Activated T-helper 2 cell treated with anti-CD3 and anti-CD28 coated beads, Interferon-gamma antibody, Interleukin-2, Interleukin-4, amounts not matched to agents 10 μg/mL and 5 μg/mL and 100 μg/mL, durations not matched to agents 14 hours and 24 hours and 36 hours (primary cell): ENCODE measurements at regions of chr20 and their contacts with region 1.

Region 1: DNA sequence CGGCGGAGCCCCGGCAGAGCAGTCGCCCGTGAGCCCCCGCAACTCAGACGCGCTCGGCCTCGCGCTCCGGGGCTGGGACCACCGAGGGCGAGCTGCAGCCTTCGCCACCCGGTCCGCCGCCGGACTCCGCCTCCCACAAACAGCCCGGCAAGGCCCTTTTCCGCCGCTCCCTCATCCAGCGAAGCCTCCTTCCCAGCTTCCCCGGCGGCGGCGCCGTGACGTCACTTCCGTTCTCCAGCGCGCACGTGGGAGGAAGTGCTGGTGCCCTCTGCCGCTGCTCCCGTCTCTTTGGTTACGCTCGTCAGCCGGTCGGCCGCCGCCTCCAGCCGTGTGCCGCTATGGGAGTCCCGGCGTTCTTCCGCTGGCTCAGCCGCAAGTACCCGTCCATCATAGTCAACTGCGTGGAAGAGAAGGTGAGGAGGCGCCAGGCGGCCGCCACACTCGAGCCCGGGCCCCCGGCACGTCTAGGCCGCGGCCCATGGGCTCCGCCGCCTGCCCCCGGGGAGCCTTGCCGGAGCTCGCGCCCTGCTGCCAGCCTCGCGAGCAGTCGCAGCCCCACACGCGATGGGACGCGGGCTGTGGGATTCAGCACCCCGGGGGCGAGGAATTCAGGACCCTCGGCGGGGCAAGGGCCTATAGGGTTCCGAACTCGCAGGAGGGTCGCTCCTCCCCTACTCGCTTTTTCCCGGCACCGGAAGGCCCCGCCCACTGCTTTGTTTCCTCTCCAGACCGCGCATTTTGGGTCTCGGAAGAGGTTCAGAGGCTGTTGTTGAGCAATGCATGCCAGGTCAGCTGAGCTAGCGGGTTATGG is at the start of gene XRN2:
- DNase-seq: peak; percentile 92
- H3K4me3 Mint-ChIP-seq: peak within 1 kb of the TSS; percentile 97
- H3K27ac Mint-ChIP-seq: peak within 1 kb of the TSS; percentile 99
- H3K4me1 Mint-ChIP-seq: peaks cover 29% of the 10 kb centered on the region
- H3K27me3 Mint-ChIP-seq: no peaks in the 10 kb centered on the region
- total RNA-seq, gene XRN2: 87.7 and 90.2 TPM in 2 replicates

Region 2: GRCh38 chr20:21125849-21126580 is 177.3 kb before region 1 on chr20 and contains the start of gene KIZ:
- intact Hi-C with region 1: loop called (anchors 1 kb)
- DNase-seq: peak; percentile 95
- H3K4me3 Mint-ChIP-seq: peak within 1 kb of the TSS; percentile 86
- H3K27ac Mint-ChIP-seq: peak within 1 kb of the TSS; percentile 70
- H3K4me1 Mint-ChIP-seq: peaks cover 21% of the 10 kb centered on the region
- H3K27me3 Mint-ChIP-seq: peaks cover 1% of the 10 kb centered on the region
- total RNA-seq, gene KIZ: 8.9 and 10.5 TPM in 2 replicates

Region 3: DNA sequence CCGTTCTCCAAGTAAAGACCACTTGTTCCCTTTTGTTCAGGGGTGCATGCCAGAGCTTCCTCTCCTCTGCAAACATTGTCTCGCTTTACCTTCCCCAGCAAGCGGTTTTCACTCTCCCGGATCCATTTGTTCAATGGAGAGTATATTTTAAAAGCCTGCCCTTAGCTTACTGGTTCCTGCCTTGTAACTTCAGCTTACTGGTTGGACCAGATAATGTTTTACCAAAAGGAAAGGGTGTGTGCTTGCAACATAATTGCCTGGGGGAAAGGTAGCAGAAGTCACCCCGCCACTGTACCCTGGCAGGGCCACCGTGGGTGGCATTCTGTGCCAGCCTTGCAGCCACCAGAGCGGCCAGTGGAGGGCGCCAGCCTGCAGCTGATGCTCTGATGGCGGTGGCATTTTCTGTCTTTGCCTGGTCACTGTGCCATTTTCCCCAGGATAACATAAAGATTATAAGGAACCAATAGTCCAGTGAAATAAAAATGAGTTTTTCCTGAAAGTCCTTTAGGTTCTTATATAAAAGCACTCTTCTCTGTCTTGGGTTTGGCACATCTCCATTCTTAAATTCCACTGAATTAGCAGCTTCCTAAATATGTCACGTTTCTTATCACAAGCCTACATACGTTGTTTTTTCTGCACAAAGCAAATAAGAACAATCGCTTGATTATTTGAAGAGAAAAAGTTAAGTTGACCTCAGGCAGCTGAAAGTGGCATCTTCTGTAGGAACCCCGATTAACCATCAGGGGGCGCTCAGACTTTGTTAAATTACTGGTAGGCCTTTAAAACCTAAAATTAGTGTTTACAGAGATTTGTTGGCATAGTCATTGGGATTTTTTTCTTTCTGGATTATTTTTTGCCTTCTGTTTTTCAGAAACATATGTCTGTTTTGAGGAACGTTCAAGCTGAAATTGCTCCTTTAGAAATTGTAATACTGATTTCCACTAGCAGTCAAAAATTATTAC is 67.5 kb before region 1 on chr20:
- intact Hi-C with region 1: loop called (anchors 1 kb)
- DNase-seq: peak; percentile 40
- H3K4me3 Mint-ChIP-seq: no peak overlapping the region
- H3K27ac Mint-ChIP-seq: no peak overlapping the region
- H3K4me1 Mint-ChIP-seq: peaks cover 3% of the 10 kb centered on the region
- H3K27me3 Mint-ChIP-seq: no peaks in the 10 kb centered on the region

Region 4: GRCh38 chr20:21251278-21251677 is 52.0 kb before region 1 on chr20:
- intact Hi-C with region 1: loop called (anchors 2 kb)
- DNase-seq: no peak
- H3K4me3 Mint-ChIP-seq: peak overlapping the region; percentile 42
- H3K27ac Mint-ChIP-seq: peak overlapping the region; percentile 95
- H3K4me1 Mint-ChIP-seq: peaks cover 21% of the 10 kb centered on the region
- H3K27me3 Mint-ChIP-seq: no peaks in the 10 kb centered on the region

Region 5: GRCh38 chr20:21361266-21361665 is 58.0 kb after region 1 on chr20:
- intact Hi-C with region 1: loop called (anchors 5 kb)
- DNase-seq: no peak
- H3K4me3 Mint-ChIP-seq: no peak overlapping the region
- H3K27ac Mint-ChIP-seq: peak overlapping the region; percentile 46
- H3K4me1 Mint-ChIP-seq: peaks cover 21% of the 10 kb centered on the region
- H3K27me3 Mint-ChIP-seq: no peaks in the 10 kb centered on the region